ENCODE measurements at regions of chr4 and their contacts with region 1.

Region 1: GRCh38 chr4:170027181-170027829 is 1.1 kb upstream of the MFAP3L start:
- DNase-seq: peak; percentile 86 to 94
- ATAC-seq: peak; percentile 72 to 84 (median 73)
- H3K4me3 ChIP-seq: peak overlapping the region; percentile 90
- H3K4me3 Mint-ChIP-seq: peak overlapping the region; percentile 94
- H3K27ac ChIP-seq: no peak overlapping the region
- H3K27ac Mint-ChIP-seq: peak overlapping the region; percentile 82 to 86
- H3K4me1 ChIP-seq: peaks cover 10% of the 10 kb centered on the region
- H3K4me1 Mint-ChIP-seq: peaks cover 14 to 16% of the 10 kb centered on the region in 2 donors
- H3K27me3 ChIP-seq: peaks cover 9% of the 10 kb centered on the region
- H3K27me3 Mint-ChIP-seq: peaks cover 7 to 20% of the 10 kb centered on the region in 2 donors
- CTCF ChIP-seq: no peak

Region 2: DNA sequence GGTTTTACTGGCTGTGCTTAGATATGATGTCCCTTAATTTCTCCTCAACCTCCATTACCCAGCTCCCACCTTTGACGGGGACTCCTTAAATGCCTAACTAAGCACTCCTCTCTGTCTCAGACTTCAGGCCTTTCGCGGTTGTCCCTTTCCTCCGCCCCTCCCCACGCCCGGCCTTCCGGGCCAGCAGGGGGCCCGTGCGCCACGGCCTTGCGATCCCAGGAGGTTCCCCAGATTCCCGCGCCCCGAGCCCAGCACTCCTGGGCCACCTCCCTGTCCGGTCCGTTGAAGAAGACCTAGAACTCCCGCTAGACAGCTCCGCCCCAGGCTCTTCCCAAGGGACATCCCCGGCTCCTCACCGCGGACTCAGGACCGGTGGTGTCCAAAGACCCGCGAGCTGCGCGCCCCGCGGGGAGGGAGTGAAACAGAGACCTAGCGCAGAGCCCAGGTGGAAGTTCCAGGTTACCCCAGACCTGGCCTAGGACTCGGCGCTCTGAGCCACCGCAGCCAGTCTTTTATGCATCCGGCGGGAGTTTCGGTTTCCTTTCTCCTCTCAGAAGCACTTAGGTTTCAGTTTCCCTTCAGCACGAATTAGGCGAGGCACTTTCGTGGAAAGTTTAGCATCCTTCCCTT is 1708.9 kb before region 1 on chr4 and contains the start of gene DDX60:
- intact Hi-C with region 1: loop called (anchors 10 kb)
- DNase-seq: peak; percentile 79 to 95
- ATAC-seq: peak; percentile 92 to 95 (median 94)
- H3K4me3 ChIP-seq: peak within 1 kb of the TSS; percentile 83
- H3K4me3 Mint-ChIP-seq: peak within 1 kb of the TSS; percentile 94
- H3K27ac ChIP-seq: peak within 1 kb of the TSS; percentile 93
- H3K27ac Mint-ChIP-seq: peak within 1 kb of the TSS; percentile 96 to 99
- H3K4me1 ChIP-seq: peaks cover 6% of the 10 kb centered on the region
- H3K4me1 Mint-ChIP-seq: peaks cover 26 to 33% of the 10 kb centered on the region in 2 donors
- H3K27me3 ChIP-seq: no peaks in the 10 kb centered on the region
- H3K27me3 Mint-ChIP-seq: no peaks in the 10 kb centered on the region
- CTCF ChIP-seq: peak; percentile 35
- total RNA-seq, gene DDX60: 29.4 to 37.2 (median 31.5) TPM

Region 3: GRCh38 chr4:168486961-168487305 is 1540.4 kb before region 1 on chr4:
- intact Hi-C with region 1: no loop called
- DNase-seq: no peak
- ATAC-seq: no peak
- H3K4me3 ChIP-seq: no peak overlapping the region
- H3K4me3 Mint-ChIP-seq: no peak overlapping the region
- H3K27ac ChIP-seq: no peak overlapping the region
- H3K27ac Mint-ChIP-seq: no peak overlapping the region
- H3K4me1 ChIP-seq: no peaks in the 10 kb centered on the region
- H3K4me1 Mint-ChIP-seq: peaks cover 4% of the 10 kb centered on the region in 2 donors
- H3K27me3 ChIP-seq: no peaks in the 10 kb centered on the region
- H3K27me3 Mint-ChIP-seq: peaks cover 20 to 21% of the 10 kb centered on the region in 2 donors
- CTCF ChIP-seq: no peak

Region 4: DNA sequence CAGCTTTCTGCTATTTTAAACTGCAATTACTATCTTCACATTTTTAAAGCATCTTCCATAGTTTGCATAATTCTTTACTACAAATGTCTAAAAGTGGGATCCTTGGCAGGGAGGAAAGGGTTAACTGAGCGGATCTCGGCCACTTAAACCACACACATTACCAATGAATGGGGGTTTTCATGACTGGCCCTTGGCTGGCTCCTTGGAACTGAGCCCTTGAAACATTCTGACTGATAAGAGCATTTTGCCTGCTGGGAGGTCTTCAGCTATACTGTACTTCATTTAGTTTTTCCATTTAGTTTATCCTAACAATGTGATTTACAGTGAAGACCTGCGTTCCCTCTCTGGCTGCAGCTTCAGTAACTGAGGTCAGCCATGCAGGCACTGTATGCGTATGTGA is 30.6 kb after region 1 on chr4:
- intact Hi-C with region 1: no loop called
- DNase-seq: no peak
- ATAC-seq: no peak
- H3K4me3 ChIP-seq: no peak overlapping the region
- H3K4me3 Mint-ChIP-seq: no peak overlapping the region
- H3K27ac ChIP-seq: no peak overlapping the region
- H3K27ac Mint-ChIP-seq: no peak overlapping the region
- H3K4me1 ChIP-seq: no peaks in the 10 kb centered on the region
- H3K4me1 Mint-ChIP-seq: no peaks in the 10 kb centered on the region
- H3K27me3 ChIP-seq: no peaks in the 10 kb centered on the region
- H3K27me3 Mint-ChIP-seq: peaks cover 1 to 2% of the 10 kb centered on the region in 2 donors
- CTCF ChIP-seq: no peak

Measured in natural killer cell (primary cell).